ENCODE measurements at regions of chr4 and their contacts with region 1.

Region 1: GRCh38 chr4:138114434-138114833 is 127.7 kb downstream of the SLC7A11 start:
- DNase-seq: peak; percentile 72
- ATAC-seq: peak; percentile 94
- H3K4me3 ChIP-seq: no peak overlapping the region
- H3K4me3 Mint-ChIP-seq: peak overlapping the region; percentile 50
- H3K27ac ChIP-seq: peak overlapping the region; percentile 16 to 44
- H3K27ac Mint-ChIP-seq: peak overlapping the region; percentile 71
- H3K4me1 ChIP-seq: peaks cover 24 to 25% of the 10 kb centered on the region in 2 donors
- H3K4me1 Mint-ChIP-seq: peaks cover 32% of the 10 kb centered on the region
- H3K27me3 ChIP-seq: no peaks in the 10 kb centered on the region
- H3K27me3 Mint-ChIP-seq: no peaks in the 10 kb centered on the region
- CTCF ChIP-seq: no peak

Region 2: GRCh38 chr4:138062929-138063328 is 51.5 kb before region 1 on chr4:
- CTCF ChIA-PET with region 1: no interaction called
- POLR2A ChIA-PET with region 1: no interaction called
- intact Hi-C with region 1: no loop called
- DNase-seq: no peak
- ATAC-seq: no peak
- H3K4me3 ChIP-seq: no peak overlapping the region
- H3K4me3 Mint-ChIP-seq: no peak overlapping the region
- H3K27ac ChIP-seq: no peak overlapping the region
- H3K27ac Mint-ChIP-seq: no peak overlapping the region
- H3K4me1 ChIP-seq: no peaks in the 10 kb centered on the region
- H3K4me1 Mint-ChIP-seq: no peaks in the 10 kb centered on the region
- H3K27me3 ChIP-seq: peaks cover 0 to 8% (median 0%) of the 10 kb centered on the region in 4 experiments
- H3K27me3 Mint-ChIP-seq: peaks cover 16% of the 10 kb centered on the region
- CTCF ChIP-seq: no peak

Region 3: GRCh38 chr4:138090150-138090917 is 24.1 kb before region 1 on chr4:
- CTCF ChIA-PET with region 1: interaction called, 10 read pairs
- POLR2A ChIA-PET with region 1: no interaction called
- intact Hi-C with region 1: no loop called
- DNase-seq: peak; percentile 59
- ATAC-seq: peak; percentile 67
- H3K4me3 ChIP-seq: no peak overlapping the region
- H3K4me3 Mint-ChIP-seq: no peak overlapping the region
- H3K27ac ChIP-seq: no peak overlapping the region
- H3K27ac Mint-ChIP-seq: no peak overlapping the region
- H3K4me1 ChIP-seq: no peaks in the 10 kb centered on the region
- H3K4me1 Mint-ChIP-seq: no peaks in the 10 kb centered on the region
- H3K27me3 ChIP-seq: peaks cover 0 to 5% (median 0%) of the 10 kb centered on the region in 4 experiments
- H3K27me3 Mint-ChIP-seq: peaks cover 29% of the 10 kb centered on the region
- CTCF ChIP-seq: peak; percentile 90

Region 4: DNA sequence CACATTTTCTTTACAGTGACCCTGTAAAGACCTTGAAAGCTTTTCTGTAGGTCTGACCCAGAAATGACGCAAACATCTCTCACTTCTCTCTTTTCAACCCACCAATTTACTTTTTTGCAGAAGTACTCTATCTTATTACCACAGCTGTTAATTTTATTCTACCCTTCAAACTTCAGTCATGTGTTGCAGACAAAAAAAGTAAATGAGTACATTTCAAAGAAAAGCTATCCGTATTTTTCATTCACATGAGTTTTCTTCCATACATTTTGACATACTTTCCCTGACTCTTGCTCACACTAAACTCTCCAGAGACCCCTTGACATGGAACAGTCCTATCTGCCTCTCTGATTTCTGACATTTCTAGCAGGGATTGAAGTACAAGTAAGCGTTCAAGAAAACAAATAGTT is 76.0 kb after region 1 on chr4:
- CTCF ChIA-PET with region 1: no interaction called
- POLR2A ChIA-PET with region 1: no interaction called
- intact Hi-C with region 1: loop called (anchors 2 kb)
- DNase-seq: peak; percentile 76
- ATAC-seq: peak; percentile 87
- H3K4me3 ChIP-seq: peak overlapping the region in 1 of 5 experiments; percentile 21
- H3K4me3 Mint-ChIP-seq: peak overlapping the region; percentile 69
- H3K27ac ChIP-seq: peak overlapping the region; percentile 37 to 38
- H3K27ac Mint-ChIP-seq: peak overlapping the region; percentile 73
- H3K4me1 ChIP-seq: peaks cover 21% of the 10 kb centered on the region in 2 donors
- H3K4me1 Mint-ChIP-seq: peaks cover 22% of the 10 kb centered on the region
- H3K27me3 ChIP-seq: peaks cover 0 to 4% (median 0%) of the 10 kb centered on the region in 4 experiments
- H3K27me3 Mint-ChIP-seq: peaks cover 11% of the 10 kb centered on the region
- CTCF ChIP-seq: no peak

Measured in B cell (primary cell).